ENCODE measurements at regions of chrX and their contacts with region 1.

Region 1: GRCh38 chrX:25389266-25389665 is 373.5 kb upstream of the ARX start:
- DNase-seq: no peak
- H3K4me3 ChIP-seq: no peak overlapping the region
- H3K27ac ChIP-seq: no peak overlapping the region
- H3K4me1 ChIP-seq: no peaks in the 10 kb centered on the region
- H3K27me3 ChIP-seq: no peaks in the 10 kb centered on the region
- CTCF ChIP-seq: no peak
- POLR2A ChIP-seq: no peak

Region 2: GRCh38 chrX:25206778-25207177 is 182.5 kb before region 1 on chrX:
- intact Hi-C with region 1: no loop called
- DNase-seq: no peak
- H3K4me3 ChIP-seq: no peak overlapping the region
- H3K27ac ChIP-seq: no peak overlapping the region
- H3K4me1 ChIP-seq: no peaks in the 10 kb centered on the region
- H3K27me3 ChIP-seq: no peaks in the 10 kb centered on the region
- CTCF ChIP-seq: no peak
- POLR2A ChIP-seq: no peak

Region 3: GRCh38 chrX:25337841-25338240 is 51.4 kb before region 1 on chrX:
- intact Hi-C with region 1: loop called (anchors 10 kb)
- DNase-seq: no peak
- H3K4me3 ChIP-seq: no peak overlapping the region
- H3K27ac ChIP-seq: no peak overlapping the region
- H3K4me1 ChIP-seq: no peaks in the 10 kb centered on the region
- H3K27me3 ChIP-seq: no peaks in the 10 kb centered on the region
- CTCF ChIP-seq: no peak
- POLR2A ChIP-seq: no peak